MCF 10A (cell line): ENCODE measurements at regions of chr1 and their contacts with region 1.

Region 1: GRCh38 chr1:115332813-115333608 is 5.0 kb downstream of the NGF start:
- DNase-seq: peak; percentile 90
- H3K4me3 Mint-ChIP-seq: peak overlapping the region; percentile 19
- H3K27ac Mint-ChIP-seq: peak overlapping the region; percentile 98
- H3K4me1 Mint-ChIP-seq: peaks cover 23% of the 10 kb centered on the region
- H3K27me3 Mint-ChIP-seq: no peaks in the 10 kb centered on the region
- CTCF ChIP-seq: no peak

Region 2: GRCh38 chr1:114620419-114620818 is 712.6 kb before region 1 on chr1:
- CTCF ChIA-PET with region 1: no interaction called
- POLR2A ChIA-PET with region 1: no interaction called
- intact Hi-C with region 1: no loop called
- DNase-seq: no peak
- H3K4me3 Mint-ChIP-seq: no peak overlapping the region
- H3K27ac Mint-ChIP-seq: no peak overlapping the region
- H3K4me1 Mint-ChIP-seq: no peaks in the 10 kb centered on the region
- H3K27me3 Mint-ChIP-seq: no peaks in the 10 kb centered on the region
- CTCF ChIP-seq: no peak

Region 3: GRCh38 chr1:114780344-114781226 is 552.4 kb before region 1 on chr1 and contains the start of gene SIKE1:
- CTCF ChIA-PET with region 1: no interaction called
- POLR2A ChIA-PET with region 1: no interaction called
- intact Hi-C with region 1: no loop called
- DNase-seq: peak; percentile 94
- H3K4me3 Mint-ChIP-seq: peak within 1 kb of the TSS; percentile 100
- H3K27ac Mint-ChIP-seq: peak within 1 kb of the TSS; percentile 97
- H3K4me1 Mint-ChIP-seq: no peaks in the 10 kb centered on the region
- H3K27me3 Mint-ChIP-seq: peaks cover 14% of the 10 kb centered on the region
- CTCF ChIP-seq: no peak
- total RNA-seq, gene SIKE1: 66.2 and 74.1 TPM in 2 replicates

Region 4: GRCh38 chr1:115308969-115309368 is 24.0 kb before region 1 on chr1:
- CTCF ChIA-PET with region 1: no interaction called
- POLR2A ChIA-PET with region 1: no interaction called
- intact Hi-C with region 1: no loop called
- DNase-seq: no peak
- H3K4me3 Mint-ChIP-seq: no peak overlapping the region
- H3K27ac Mint-ChIP-seq: no peak overlapping the region
- H3K4me1 Mint-ChIP-seq: no peaks in the 10 kb centered on the region
- H3K27me3 Mint-ChIP-seq: no peaks in the 10 kb centered on the region
- CTCF ChIP-seq: no peak

Region 5: GRCh38 chr1:115430441-115431116 is 97.6 kb after region 1 on chr1:
- CTCF ChIA-PET with region 1: no interaction called
- POLR2A ChIA-PET with region 1: no interaction called
- intact Hi-C with region 1: loop called (anchors 2 kb)
- DNase-seq: peak; percentile 95
- H3K4me3 Mint-ChIP-seq: no peak overlapping the region
- H3K27ac Mint-ChIP-seq: peak overlapping the region; percentile 89
- H3K4me1 Mint-ChIP-seq: peaks cover 41% of the 10 kb centered on the region
- H3K27me3 Mint-ChIP-seq: no peaks in the 10 kb centered on the region
- CTCF ChIP-seq: no peak